Panc1 (cell line): ENCODE measurements at regions of chr12 and their contacts with region 1.

Region 1: DNA sequence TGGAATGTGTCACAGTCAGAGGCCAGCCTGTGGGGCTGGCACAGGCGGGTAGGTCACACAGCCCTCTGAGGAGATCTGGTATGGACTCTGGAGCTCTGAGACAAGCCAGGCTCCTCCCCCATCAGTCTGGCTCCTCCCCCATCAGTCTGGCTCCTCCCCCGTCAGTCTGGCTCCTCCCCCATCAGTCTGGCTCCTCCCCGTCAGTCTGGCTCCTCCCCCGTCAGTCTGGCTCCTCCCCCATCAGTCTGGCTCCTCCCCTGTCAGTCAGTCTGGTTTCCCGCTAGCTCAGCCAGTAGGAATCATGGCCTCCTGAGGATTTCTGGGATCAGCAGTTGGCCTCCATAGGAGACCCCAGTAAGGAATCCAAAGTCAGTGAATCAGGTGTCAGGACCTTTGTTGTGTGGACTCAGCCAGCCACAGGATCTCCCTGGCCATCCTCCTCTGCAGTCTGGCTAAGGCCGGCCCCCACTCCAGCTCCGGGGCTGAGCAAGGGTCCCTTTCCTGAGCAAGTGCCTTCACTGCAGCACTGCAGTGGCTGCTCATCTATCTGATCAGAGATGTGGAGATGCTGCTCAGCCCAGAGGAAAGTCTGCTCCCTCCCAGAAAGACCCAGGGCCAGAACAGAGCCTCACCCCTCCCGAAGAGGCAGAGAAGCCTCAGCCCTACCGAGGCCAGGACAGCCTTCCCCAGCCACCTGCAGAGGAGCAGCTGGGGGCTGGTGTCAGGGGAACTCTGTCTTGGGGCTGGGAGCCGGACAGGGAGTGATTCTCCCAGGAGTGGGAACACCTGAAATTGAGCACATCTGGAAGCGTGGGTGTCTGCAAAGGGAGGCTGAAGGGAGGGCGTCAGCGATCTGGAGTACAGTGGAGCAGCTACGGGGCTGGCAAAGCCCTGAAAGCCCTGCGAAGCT is 35.7 kb downstream of the IQSEC3 start:
- DNase-seq: no peak
- ATAC-seq: peak; percentile 55
- H3K4me3 ChIP-seq: no peak overlapping the region
- H3K27ac ChIP-seq: no peak overlapping the region
- H3K4me1 ChIP-seq: no peaks in the 10 kb centered on the region
- H3K27me3 ChIP-seq: peaks cover 4% of the 10 kb centered on the region; the same call in 1 of the 2 replicates
- CTCF ChIP-seq: no peak

Region 2: DNA sequence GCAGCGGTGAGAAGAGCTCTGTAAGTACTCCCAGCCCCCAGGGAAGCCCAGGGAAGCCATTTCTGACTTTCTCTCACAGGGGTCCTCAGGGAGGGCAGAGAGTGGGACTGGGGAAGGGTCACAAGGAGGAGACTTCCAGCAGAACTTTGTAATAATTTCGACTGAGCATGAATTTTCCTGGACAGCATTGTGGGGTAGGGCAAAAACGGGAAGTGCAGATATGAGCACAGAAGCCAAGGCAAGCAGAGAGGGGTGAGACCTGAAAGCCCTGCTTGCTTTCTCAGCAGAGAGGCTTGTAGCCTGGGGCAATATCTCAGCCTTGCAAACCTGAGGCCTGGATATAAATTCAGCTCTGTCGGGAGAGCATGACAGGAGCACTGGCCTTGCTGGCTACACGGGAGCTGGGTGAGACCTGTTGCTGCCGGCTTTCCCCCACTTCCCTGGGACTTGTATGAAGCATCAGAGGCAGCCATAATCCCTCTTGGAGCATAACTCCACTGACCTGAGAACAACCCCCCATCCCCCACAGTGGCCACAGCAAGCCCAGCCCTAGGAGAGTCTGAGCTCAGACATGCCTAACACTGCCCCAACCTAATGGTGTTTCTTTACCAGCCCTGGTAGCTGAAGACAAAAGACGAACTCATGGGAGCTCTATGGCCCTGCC is 45.4 kb before region 1 on chr12:
- CTCF ChIA-PET with region 1: no interaction called
- POLR2A ChIA-PET with region 1: no interaction called
- in situ Hi-C with region 1: no loop called
- intact Hi-C with region 1: no loop called
- DNase-seq: no peak
- ATAC-seq: no peak; the same call in 1 of the 2 replicates
- H3K4me3 ChIP-seq: no peak overlapping the region
- H3K27ac ChIP-seq: no peak overlapping the region
- H3K4me1 ChIP-seq: no peaks in the 10 kb centered on the region
- H3K27me3 ChIP-seq: peaks cover 48% of the 10 kb centered on the region
- CTCF ChIP-seq: no peak

Region 3: GRCh38 chr12:143964-144649 is 41.9 kb after region 1 on chr12:
- CTCF ChIA-PET with region 1: no interaction called
- POLR2A ChIA-PET with region 1: no interaction called
- in situ Hi-C with region 1: no loop called
- intact Hi-C with region 1: no loop called
- DNase-seq: no peak
- ATAC-seq: no peak
- H3K4me3 ChIP-seq: no peak overlapping the region
- H3K27ac ChIP-seq: no peak overlapping the region
- H3K4me1 ChIP-seq: no peaks in the 10 kb centered on the region
- H3K27me3 ChIP-seq: no peaks in the 10 kb centered on the region
- CTCF ChIP-seq: no peak

Region 4: GRCh38 chr12:157644-158043 is 55.4 kb after region 1 on chr12:
- CTCF ChIA-PET with region 1: interaction called, 17 read pairs
- POLR2A ChIA-PET with region 1: no interaction called
- in situ Hi-C with region 1: no loop called
- intact Hi-C with region 1: no loop called
- DNase-seq: no peak
- ATAC-seq: no peak
- H3K4me3 ChIP-seq: no peak overlapping the region
- H3K27ac ChIP-seq: no peak overlapping the region
- H3K4me1 ChIP-seq: no peaks in the 10 kb centered on the region
- H3K27me3 ChIP-seq: no peaks in the 10 kb centered on the region
- CTCF ChIP-seq: no peak

Region 5: GRCh38 chr12:468671-469389 is 366.6 kb after region 1 on chr12:
- CTCF ChIA-PET with region 1: no interaction called
- POLR2A ChIA-PET with region 1: no interaction called
- in situ Hi-C with region 1: no loop called
- intact Hi-C with region 1: no loop called
- DNase-seq: no peak
- ATAC-seq: no peak
- H3K4me3 ChIP-seq: no peak overlapping the region
- H3K27ac ChIP-seq: no peak overlapping the region
- H3K4me1 ChIP-seq: peaks cover 2% of the 10 kb centered on the region; the same call in 1 of the 2 replicates
- H3K27me3 ChIP-seq: no peaks in the 10 kb centered on the region
- CTCF ChIP-seq: no peak

Region 6: DNA sequence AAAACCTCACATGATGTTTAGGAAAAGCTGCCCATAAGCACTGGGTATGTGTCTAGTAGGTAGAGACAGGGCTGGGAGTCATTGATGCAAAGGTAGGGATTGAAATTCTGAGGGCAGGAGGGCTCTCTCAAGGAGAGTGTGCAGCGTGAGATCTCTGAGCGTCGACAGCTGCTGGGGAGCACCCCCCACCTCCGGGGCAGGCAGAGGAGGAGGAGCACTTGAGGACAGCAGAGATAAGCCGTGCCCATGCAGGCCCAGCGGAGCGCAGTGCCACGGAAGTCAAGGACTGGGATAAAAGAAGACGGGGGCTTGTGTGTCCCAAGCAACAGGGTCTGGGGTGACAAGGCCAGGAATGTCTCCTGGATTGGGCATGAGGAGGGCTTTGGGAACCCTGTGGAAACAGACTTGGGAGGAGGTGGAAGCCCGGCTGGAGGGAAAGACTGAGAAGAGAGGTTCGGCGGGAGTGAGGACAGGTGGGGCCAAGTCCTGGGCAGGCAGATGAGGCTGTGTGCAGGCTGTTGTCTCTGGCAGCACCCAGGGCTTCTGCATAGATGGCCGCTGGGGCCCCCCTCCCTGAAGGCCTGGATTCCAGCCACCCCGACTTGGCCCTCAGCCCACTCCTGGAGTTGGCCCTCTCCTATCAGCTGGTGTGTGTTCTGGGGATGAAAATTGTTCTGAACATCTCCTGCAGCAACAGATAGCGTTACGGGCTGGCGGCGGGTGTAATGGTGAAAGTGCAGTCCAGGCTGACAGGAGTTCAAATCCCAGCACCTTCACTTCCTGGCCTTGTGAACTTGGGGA is 1814.3 kb after region 1 on chr12:
- CTCF ChIA-PET with region 1: no interaction called
- POLR2A ChIA-PET with region 1: no interaction called
- in situ Hi-C with region 1: no loop called
- intact Hi-C with region 1: no loop called
- DNase-seq: no peak
- ATAC-seq: no peak
- H3K4me3 ChIP-seq: no peak overlapping the region
- H3K27ac ChIP-seq: no peak overlapping the region
- H3K4me1 ChIP-seq: no peaks in the 10 kb centered on the region
- H3K27me3 ChIP-seq: no peaks in the 10 kb centered on the region
- CTCF ChIP-seq: no peak